ENCODE measurements at regions of chr1 and their contacts with region 1.

Region 1: DNA sequence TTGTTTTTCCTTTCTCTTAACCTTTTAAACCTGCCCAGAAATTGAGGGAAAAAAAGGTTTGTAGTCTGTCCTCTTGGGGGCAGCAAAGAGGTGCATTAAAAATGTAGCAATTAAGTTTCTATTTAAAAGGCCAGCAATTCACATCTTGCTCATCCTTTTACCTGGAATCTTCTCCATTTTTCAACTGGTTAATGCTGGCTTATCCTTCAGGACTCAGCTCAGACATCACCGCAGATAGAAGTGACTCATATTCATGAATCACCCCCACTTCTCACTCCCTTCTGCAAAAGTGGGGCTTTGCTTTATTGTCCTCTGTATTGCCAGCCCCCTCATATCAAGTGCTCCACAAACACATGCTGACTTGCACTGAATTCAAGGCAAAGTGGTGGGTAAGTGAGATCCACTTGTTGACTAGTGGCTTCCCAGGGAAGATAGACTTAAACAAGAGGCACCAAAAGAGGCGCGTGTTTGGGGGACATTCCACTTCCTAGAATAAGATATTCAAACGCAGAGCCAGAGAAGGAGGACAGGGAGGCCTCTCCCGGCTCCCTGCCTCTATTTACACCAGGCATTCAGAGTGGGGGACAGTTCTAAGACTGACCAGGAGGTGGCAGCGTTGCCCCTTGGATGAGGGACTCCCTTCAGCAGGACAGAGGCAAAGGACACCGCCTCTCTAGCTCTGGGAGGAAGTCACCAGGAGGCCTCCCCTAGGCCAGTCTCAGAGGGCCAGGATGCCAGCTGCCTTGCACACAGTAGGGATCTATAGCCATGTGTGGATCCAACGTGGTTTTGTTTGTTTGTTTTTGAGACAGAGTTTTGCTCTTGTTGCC is 23.2 kb upstream of the ZNF648 start:
- DNase-seq: peak; percentile 74

Region 2: GRCh38 chr1:182391362-182392044 is 306.8 kb after region 1 on chr1 and contains the start of gene GLUL:
- in situ Hi-C with region 1: loop called (anchors 10 kb)
- DNase-seq: peak; percentile 79
- total RNA-seq, gene GLUL: 862 and 1,000 TPM in 2 replicates